ENCODE measurements at regions of chr10 and their contacts with region 1.

Region 1: DNA sequence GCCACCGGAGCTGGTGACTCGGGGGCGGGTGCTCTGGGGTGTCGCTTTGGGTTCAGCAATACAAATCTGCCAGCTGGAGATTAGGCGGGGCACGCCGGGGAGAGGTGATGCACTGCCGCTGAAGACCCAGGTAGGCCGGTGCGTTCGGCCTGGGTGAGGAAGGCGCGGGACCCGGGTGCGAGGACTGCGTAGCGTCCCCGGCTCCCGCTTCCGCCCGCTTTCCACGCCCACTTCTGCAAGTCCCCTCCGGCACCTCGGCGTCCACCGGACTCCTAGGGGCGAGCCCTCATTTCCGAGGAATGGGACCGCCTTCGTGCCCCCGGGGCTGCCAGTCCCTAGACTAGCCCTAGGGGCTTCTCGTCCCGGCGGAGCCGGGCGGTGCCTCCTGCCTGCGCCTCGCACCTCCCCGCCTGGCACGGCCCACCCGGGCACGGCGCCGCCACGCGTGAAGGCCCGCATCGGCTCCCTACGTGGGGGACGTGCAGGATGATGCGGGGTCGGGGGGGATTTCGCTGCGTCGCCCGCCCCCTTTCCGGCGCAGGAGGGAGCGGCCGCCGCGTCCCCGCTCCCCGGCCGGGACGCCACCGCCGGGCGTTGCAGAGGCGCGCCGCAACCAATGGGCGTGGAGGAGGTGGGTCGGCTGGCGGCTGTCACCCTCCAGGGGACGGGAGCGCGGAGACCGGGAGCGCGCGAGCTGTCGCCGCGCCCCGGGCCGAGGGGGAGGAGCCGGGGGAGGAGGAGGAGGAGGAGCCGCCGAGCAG is 40.0 kb downstream of the HK1 start:
- DNase-seq: peak; percentile 92
- H3K4me3 Mint-ChIP-seq: peak overlapping the region; percentile 97
- H3K27ac Mint-ChIP-seq: peak overlapping the region; percentile 94
- H3K4me1 Mint-ChIP-seq: peaks cover 55% of the 10 kb centered on the region
- H3K27me3 Mint-ChIP-seq: no peaks in the 10 kb centered on the region

Region 2: GRCh38 chr10:69348816-69349541 is 30.7 kb after region 1 on chr10:
- CTCF ChIA-PET with region 1: interaction called, 4 read pairs
- POLR2A ChIA-PET with region 1: interaction called, 19 read pairs
- DNase-seq: no peak
- H3K4me3 Mint-ChIP-seq: peak overlapping the region; percentile 50
- H3K27ac Mint-ChIP-seq: peak overlapping the region; percentile 93
- H3K4me1 Mint-ChIP-seq: peaks cover 63% of the 10 kb centered on the region
- H3K27me3 Mint-ChIP-seq: no peaks in the 10 kb centered on the region

Measured in activated CD4-positive, alpha-beta memory T cell treated with anti-CD3 and anti-CD28 coated beads, Interleukin-2, amount 10 ng/mL, durations not matched to agents 7 days and 5 days (primary cell).